ENCODE measurements at regions of chr22 and their contacts with region 1.

Region 1: GRCh38 chr22:18109410-18110193 is 1.0 kb upstream of the TUBA8 start:
- DNase-seq: no peak
- H3K4me3 ChIP-seq: peak overlapping the region in 3 of 4 donors; percentile 41 to 55 (median 53)
- H3K27ac ChIP-seq: peak overlapping the region in 1 of 4 donors; percentile 75
- H3K4me1 ChIP-seq: peaks cover 0 to 19% (median 16%) of the 10 kb centered on the region in 4 donors
- H3K27me3 ChIP-seq: peaks cover 5 to 37% (median 10%) of the 10 kb centered on the region in 3 donors
- CTCF ChIP-seq: no peak
- EP300 ChIP-seq: no peak
- POLR2A ChIP-seq: no peak

Region 2: DNA sequence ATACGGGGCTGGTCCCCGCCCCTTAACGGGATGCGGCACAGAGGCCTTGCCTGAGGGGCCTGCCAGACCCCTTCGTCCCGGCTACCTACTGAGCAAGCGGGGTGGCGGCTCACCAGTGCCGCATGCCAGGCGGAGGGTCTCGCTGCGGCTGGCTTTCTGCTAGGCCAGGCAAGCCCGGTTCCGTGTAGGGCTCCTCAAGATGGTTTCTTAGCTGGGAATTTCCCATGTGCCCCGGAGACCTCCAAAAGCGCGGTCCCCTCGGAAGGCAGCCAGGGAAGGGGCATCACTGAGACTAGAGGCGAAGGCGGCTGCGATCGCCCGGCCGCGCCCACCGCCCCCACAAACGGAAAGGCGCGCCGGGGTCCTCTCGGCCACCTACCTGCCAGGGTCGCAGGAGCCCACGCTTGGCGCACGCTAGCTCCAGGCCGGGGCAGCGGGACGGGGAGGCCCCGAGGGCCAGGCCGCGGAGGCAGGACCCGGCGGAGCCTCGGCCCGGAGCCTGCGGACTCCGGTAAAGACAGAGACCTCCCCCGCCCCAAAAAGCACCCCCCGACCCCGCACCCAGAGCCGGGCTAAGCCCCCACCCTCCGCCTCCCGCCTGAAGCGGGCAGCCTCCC is 109.1 kb before region 1 on chr22:
- intact Hi-C with region 1: no loop called
- DNase-seq: peak; percentile 69
- H3K4me3 ChIP-seq: peak overlapping the region; percentile 73 to 87 (median 83)
- H3K27ac ChIP-seq: peak overlapping the region; percentile 89 to 94 (median 92)
- H3K4me1 ChIP-seq: peaks cover 0 to 47% (median 32%) of the 10 kb centered on the region in 4 donors
- H3K27me3 ChIP-seq: no peaks in the 10 kb centered on the region
- CTCF ChIP-seq: no peak
- EP300 ChIP-seq: no peak
- POLR2A ChIP-seq: no peak

Region 3: GRCh38 chr22:18144105-18144504 is 34.5 kb after region 1 on chr22:
- intact Hi-C with region 1: loop called (anchors 5 kb)
- DNase-seq: no peak
- H3K4me3 ChIP-seq: no peak overlapping the region
- H3K27ac ChIP-seq: no peak overlapping the region
- H3K4me1 ChIP-seq: peaks cover 0 to 3% (median 1%) of the 10 kb centered on the region in 4 donors
- H3K27me3 ChIP-seq: no peaks in the 10 kb centered on the region
- CTCF ChIP-seq: no peak
- EP300 ChIP-seq: no peak
- POLR2A ChIP-seq: no peak